PC-9 (cell line): ENCODE measurements at regions of chr6 and their contacts with region 1.

Region 1: GRCh38 chr6:80605165-80605989 is 498.9 kb downstream of the BCKDHB start:
- DNase-seq: no peak
- H3K4me3 ChIP-seq: no peak overlapping the region
- H3K27ac ChIP-seq: no peak overlapping the region
- H3K4me1 ChIP-seq: 0 out of 2 replicates have a peak, but pooled peaks cover 4% of the 10 kb centered on the region
- H3K27me3 ChIP-seq: no peaks in the 10 kb centered on the region
- CTCF ChIP-seq: peak; percentile 66

Region 2: GRCh38 chr6:80338201-80338836 is 267.1 kb before region 1 on chr6:
- CTCF ChIA-PET with region 1: no interaction called
- POLR2A ChIA-PET with region 1: no interaction called
- intact Hi-C with region 1: loop called (anchors 5 kb)
- DNase-seq: peak in 1 of 2 experiments; percentile 60
- H3K4me3 ChIP-seq: no peak overlapping the region
- H3K27ac ChIP-seq: no peak overlapping the region
- H3K4me1 ChIP-seq: no peaks in the 10 kb centered on the region
- H3K27me3 ChIP-seq: no peaks in the 10 kb centered on the region
- CTCF ChIP-seq: peak; percentile 73

Region 3: GRCh38 chr6:80622641-80623040 is 17.3 kb after region 1 on chr6:
- CTCF ChIA-PET with region 1: no interaction called
- POLR2A ChIA-PET with region 1: no interaction called
- intact Hi-C with region 1: loop called (anchors 1 kb)
- DNase-seq: peak; percentile 80 to 88
- H3K4me3 ChIP-seq: no peak overlapping the region
- H3K27ac ChIP-seq: peak overlapping the region; percentile 60
- H3K4me1 ChIP-seq: peaks cover 12% of the 10 kb centered on the region
- H3K27me3 ChIP-seq: no peaks in the 10 kb centered on the region
- CTCF ChIP-seq: no peak

Region 4: DNA sequence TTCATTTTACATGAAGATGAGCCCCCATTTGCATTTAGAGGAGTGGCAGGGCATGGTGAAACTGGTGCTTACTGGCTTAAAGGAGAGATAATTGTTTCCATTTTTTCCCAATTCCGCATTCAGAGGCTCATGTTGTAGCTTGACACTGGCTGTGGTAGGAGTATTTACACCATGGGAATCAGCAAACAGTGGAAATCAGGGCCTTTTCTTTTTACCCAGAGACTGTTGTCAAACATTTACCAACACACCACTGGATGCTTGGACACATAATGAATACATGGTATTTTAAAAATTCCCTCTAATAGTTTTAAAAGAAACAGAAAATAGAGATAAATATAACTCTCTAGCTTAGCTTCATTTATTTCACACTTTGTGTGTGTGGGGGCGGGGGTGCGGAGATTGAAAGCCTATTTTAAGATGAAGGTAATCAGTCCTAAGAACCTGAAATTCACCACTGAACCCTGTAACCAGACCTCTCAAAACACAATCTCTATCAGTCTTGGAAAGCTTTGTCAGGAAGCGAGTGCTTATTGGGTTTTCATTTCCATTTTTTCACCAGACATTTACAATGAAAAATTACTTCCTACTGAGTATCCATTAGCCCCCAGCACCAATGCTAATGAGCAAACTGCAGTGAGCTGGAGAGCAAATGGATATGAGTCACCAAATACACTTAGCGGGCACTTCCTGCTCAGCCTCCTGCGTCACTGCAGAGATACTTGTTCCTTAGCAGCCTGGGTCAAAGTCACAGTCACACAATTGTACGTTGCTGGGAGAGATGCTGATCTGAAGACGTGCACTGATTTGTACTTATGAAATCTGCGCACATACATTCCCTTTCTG is 33.1 kb after region 1 on chr6:
- CTCF ChIA-PET with region 1: no interaction called
- POLR2A ChIA-PET with region 1: no interaction called
- intact Hi-C with region 1: loop called (anchors 2 kb)
- DNase-seq: peak; percentile 62 to 68
- H3K4me3 ChIP-seq: no peak overlapping the region
- H3K27ac ChIP-seq: 0 out of 2 replicates have a peak overlapping the region, but pooled peaks have one; percentile 39
- H3K4me1 ChIP-seq: no peaks in the 10 kb centered on the region
- H3K27me3 ChIP-seq: no peaks in the 10 kb centered on the region
- CTCF ChIP-seq: no peak

Region 5: GRCh38 chr6:80742481-80742880 is 137.1 kb after region 1 on chr6:
- CTCF ChIA-PET with region 1: no interaction called
- POLR2A ChIA-PET with region 1: no interaction called
- intact Hi-C with region 1: loop called (anchors 5 kb)
- DNase-seq: no peak
- H3K4me3 ChIP-seq: no peak overlapping the region
- H3K27ac ChIP-seq: no peak overlapping the region
- H3K4me1 ChIP-seq: no peaks in the 10 kb centered on the region
- H3K27me3 ChIP-seq: no peaks in the 10 kb centered on the region
- CTCF ChIP-seq: peak; percentile 56